ENCODE measurements at regions of chr4 and their contacts with region 1.

Region 1: GRCh38 chr4:123396307-123397143 is at the start of gene SPRY1:
- DNase-seq: peak; percentile 74 to 92 (median 88)
- ATAC-seq: peak; percentile 62 to 78 (median 72)
- H3K4me3 ChIP-seq: peak within 1 kb of the TSS; percentile 50 to 74 (median 66)
- H3K27ac ChIP-seq: peak within 1 kb of the TSS; percentile 89 to 97 (median 94)
- H3K4me1 ChIP-seq: peaks cover 0 to 9% (median 0%) of the 10 kb centered on the region in 3 donors
- H3K27me3 ChIP-seq: no peaks in the 10 kb centered on the region
- CTCF ChIP-seq: no peak
- total RNA-seq, gene SPRY1: 11.2 to 29.7 (median 21.5) TPM

Region 2: GRCh38 chr4:122988696-122989095 is 407.8 kb before region 1 on chr4:
- intact Hi-C with region 1: no loop called
- DNase-seq: no peak
- ATAC-seq: no peak
- H3K4me3 ChIP-seq: no peak overlapping the region
- H3K27ac ChIP-seq: no peak overlapping the region
- H3K4me1 ChIP-seq: peaks cover 4 to 7% (median 7%) of the 10 kb centered on the region in 3 donors
- H3K27me3 ChIP-seq: no peaks in the 10 kb centered on the region
- CTCF ChIP-seq: no peak

Region 3: DNA sequence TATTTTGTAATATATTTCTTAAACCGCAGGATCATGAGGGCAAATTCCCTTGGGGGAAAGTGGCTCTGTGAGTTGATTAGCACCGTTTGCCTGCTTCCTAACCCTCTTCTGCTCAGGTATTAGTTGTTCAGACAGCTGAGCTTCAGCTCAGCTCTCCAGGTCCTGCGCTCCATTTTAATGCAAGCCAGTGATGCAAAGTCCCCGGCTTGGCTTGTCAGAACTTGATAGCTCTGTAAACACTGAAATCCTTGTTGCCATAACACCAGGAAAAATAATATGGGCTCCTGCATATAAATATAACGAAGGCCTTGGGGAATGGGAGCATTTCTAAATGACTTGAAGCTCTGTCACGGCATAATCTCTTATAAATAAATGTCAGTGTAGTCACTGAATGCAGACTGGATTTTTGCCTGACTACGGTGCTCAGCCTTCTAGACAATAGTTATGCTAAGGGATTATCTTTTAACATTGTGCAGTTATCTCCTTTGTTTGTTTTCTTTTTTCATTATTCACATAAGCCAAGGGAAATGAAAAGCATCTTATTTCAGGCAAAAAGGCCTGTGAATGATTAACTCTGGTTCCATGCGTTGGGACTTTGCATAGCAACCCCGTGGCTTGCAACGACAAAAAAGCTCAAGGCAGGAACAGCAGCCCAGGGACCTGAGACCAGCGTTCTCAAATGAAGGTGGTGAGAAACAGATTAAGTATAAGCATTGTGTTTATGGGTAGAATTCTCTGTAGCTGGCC is 253.3 kb after region 1 on chr4:
- intact Hi-C with region 1: loop called in 1 of 3 experiments (anchors 10 kb)
- DNase-seq: peak; percentile 52 to 73 (median 60)
- ATAC-seq: peak; percentile 91 to 93 (median 92)
- H3K4me3 ChIP-seq: peak overlapping the region in 2 of 4 donors; percentile 19 to 25
- H3K27ac ChIP-seq: peak overlapping the region; percentile 63 to 83 (median 78)
- H3K4me1 ChIP-seq: peaks cover 12 to 22% (median 20%) of the 10 kb centered on the region in 3 donors
- H3K27me3 ChIP-seq: no peaks in the 10 kb centered on the region
- CTCF ChIP-seq: no peak

Region 4: DNA sequence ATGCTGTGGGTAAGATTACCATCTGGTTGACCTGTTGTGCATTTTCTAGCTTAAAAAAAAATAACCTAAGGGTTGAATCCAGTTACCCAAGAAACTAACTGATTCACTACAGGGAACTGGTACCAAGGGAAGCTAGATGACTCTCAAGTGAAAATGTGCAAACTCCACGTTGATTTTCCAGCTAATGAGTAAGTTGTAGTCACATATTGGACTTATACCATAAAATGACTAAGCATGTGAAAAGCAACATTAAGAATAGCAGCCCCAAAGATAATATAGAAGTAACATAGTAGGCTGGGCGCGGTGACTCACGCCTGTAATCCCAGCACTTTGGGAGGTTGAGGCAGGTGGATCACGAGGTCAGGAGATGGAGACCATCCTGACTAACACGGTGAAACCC is 271.0 kb after region 1 on chr4:
- intact Hi-C with region 1: no loop called
- DNase-seq: no peak
- ATAC-seq: no peak
- H3K4me3 ChIP-seq: no peak overlapping the region
- H3K27ac ChIP-seq: no peak overlapping the region
- H3K4me1 ChIP-seq: no peaks in the 10 kb centered on the region
- H3K27me3 ChIP-seq: no peaks in the 10 kb centered on the region
- CTCF ChIP-seq: no peak

Region 5: DNA sequence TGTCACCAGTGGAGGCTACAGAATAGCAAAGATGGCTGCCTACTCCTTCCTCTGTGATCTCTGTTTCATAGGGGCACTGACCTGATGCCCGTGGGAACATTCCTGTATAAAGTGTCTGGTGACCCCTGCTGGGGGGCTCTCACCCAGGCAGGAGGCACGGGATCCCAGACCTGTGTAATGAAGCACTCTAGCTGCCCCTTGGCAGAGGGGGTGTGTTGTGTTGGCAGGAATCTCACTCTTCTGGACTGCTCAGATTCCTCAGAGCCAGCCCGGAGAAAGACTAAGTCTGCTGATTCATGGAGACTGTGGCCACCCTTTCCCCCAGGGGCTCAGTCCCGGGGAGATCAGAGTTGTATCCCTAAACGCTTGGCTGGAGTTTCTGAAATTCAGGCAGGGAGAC is 648.3 kb after region 1 on chr4:
- intact Hi-C with region 1: loop called in 1 of 3 experiments (anchors 10 kb)
- DNase-seq: no peak
- ATAC-seq: no peak
- H3K4me3 ChIP-seq: no peak overlapping the region
- H3K27ac ChIP-seq: no peak overlapping the region
- H3K4me1 ChIP-seq: no peaks in the 10 kb centered on the region
- H3K27me3 ChIP-seq: no peaks in the 10 kb centered on the region
- CTCF ChIP-seq: no peak